Activated CD4-positive, alpha-beta T cell treated with anti-CD3 and anti-CD28 coated beads for 36 hours (primary cell): ENCODE measurements at regions of chr1 and their contacts with region 1.

Region 1: GRCh38 chr1:115469703-115470476 is 131.8 kb upstream of the NGF start:
- DNase-seq: peak; percentile 59
- ATAC-seq: peak; percentile 30
- H3K4me3 Mint-ChIP-seq: no peak overlapping the region
- H3K27ac Mint-ChIP-seq: no peak overlapping the region
- H3K4me1 Mint-ChIP-seq: peaks cover 5% of the 10 kb centered on the region
- H3K27me3 Mint-ChIP-seq: peaks cover 3% of the 10 kb centered on the region

Region 2: GRCh38 chr1:115062542-115063011 is 407.3 kb before region 1 on chr1:
- CTCF ChIA-PET with region 1: no interaction called
- POLR2A ChIA-PET with region 1: no interaction called
- intact Hi-C with region 1: no loop called
- DNase-seq: peak; percentile 93
- ATAC-seq: peak; percentile 88
- H3K4me3 Mint-ChIP-seq: peak overlapping the region; percentile 23
- H3K27ac Mint-ChIP-seq: peak overlapping the region; percentile 75
- H3K4me1 Mint-ChIP-seq: peaks cover 40% of the 10 kb centered on the region
- H3K27me3 Mint-ChIP-seq: no peaks in the 10 kb centered on the region

Region 3: GRCh38 chr1:115138968-115139367 is 330.9 kb before region 1 on chr1:
- CTCF ChIA-PET with region 1: interaction called, 10 read pairs
- POLR2A ChIA-PET with region 1: no interaction called
- intact Hi-C with region 1: loop called (anchors 2 to 10 kb)
- DNase-seq: peak; percentile 79
- ATAC-seq: peak; percentile 88
- H3K4me3 Mint-ChIP-seq: peak overlapping the region; percentile 11
- H3K27ac Mint-ChIP-seq: no peak overlapping the region
- H3K4me1 Mint-ChIP-seq: peaks cover 4% of the 10 kb centered on the region
- H3K27me3 Mint-ChIP-seq: peaks cover 11% of the 10 kb centered on the region

Region 4: GRCh38 chr1:115409097-115410015 is 60.5 kb before region 1 on chr1:
- CTCF ChIA-PET with region 1: no interaction called
- POLR2A ChIA-PET with region 1: no interaction called
- intact Hi-C with region 1: loop called in 1 of 2 experiments (anchors 10 kb)
- DNase-seq: no peak
- ATAC-seq: no peak
- H3K4me3 Mint-ChIP-seq: no peak overlapping the region
- H3K27ac Mint-ChIP-seq: no peak overlapping the region
- H3K4me1 Mint-ChIP-seq: peaks cover 10% of the 10 kb centered on the region
- H3K27me3 Mint-ChIP-seq: peaks cover 28% of the 10 kb centered on the region

Region 5: DNA sequence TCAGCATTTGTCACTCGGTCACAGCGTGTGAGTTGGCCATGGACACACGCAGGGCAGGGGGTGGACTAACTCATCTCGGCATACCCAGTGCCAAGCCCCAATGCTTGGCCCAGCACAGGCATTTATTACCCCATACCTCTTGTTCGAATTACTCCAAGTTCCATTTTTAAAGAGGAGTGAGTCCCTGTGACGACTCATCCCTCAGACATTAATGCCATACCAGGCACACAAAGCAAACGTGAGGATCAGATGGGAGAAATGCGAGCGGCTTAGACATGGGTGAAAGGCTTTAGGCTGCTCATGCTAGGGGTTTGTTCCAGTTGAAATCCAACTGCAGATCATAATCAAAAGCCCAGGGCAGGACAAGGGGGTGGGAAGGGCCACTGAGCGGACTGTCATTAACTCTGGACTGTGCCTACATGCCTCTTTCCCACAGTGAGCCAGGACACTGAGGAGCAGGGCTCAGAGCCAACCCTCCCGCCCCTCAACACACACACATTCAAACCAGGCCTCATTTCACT is 13.4 kb before region 1 on chr1:
- CTCF ChIA-PET with region 1: no interaction called
- POLR2A ChIA-PET with region 1: no interaction called
- intact Hi-C with region 1: no loop called
- DNase-seq: no peak
- ATAC-seq: no peak
- H3K4me3 Mint-ChIP-seq: no peak overlapping the region
- H3K27ac Mint-ChIP-seq: no peak overlapping the region
- H3K4me1 Mint-ChIP-seq: no peaks in the 10 kb centered on the region
- H3K27me3 Mint-ChIP-seq: no peaks in the 10 kb centered on the region

Region 6: GRCh38 chr1:115685029-115685705 is 215.3 kb after region 1 on chr1:
- CTCF ChIA-PET with region 1: no interaction called
- POLR2A ChIA-PET with region 1: no interaction called
- intact Hi-C with region 1: no loop called
- DNase-seq: no peak
- ATAC-seq: peak; percentile 26
- H3K4me3 Mint-ChIP-seq: no peak overlapping the region
- H3K27ac Mint-ChIP-seq: no peak overlapping the region
- H3K4me1 Mint-ChIP-seq: no peaks in the 10 kb centered on the region
- H3K27me3 Mint-ChIP-seq: no peaks in the 10 kb centered on the region